ENCODE measurements at regions of chr6 and their contacts with region 1.

Region 1: DNA sequence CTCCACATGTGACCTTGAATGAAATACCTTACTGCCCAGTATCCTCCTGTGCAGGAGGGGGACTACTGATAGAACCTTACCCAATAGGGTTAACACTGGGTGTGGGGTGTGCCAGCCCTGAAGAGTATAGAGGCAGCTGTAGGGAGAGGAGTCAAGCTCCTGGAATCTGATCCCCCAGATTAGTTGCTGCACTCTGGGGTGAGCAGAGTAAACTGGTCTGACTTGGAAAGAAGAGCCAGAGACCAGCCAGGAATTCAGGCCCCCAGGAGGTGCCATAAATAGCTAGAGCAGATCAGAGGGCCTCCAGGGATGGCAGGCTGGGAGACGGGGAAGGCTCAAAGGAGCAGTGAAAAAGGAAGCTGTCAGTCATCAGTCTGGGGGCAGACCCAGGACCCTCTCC is 3.5 kb upstream of the APOBEC2 start:
- DNase-seq: peak; percentile 69 to 85
- H3K4me3 ChIP-seq: no peak overlapping the region
- H3K4me3 Mint-ChIP-seq: peak overlapping the region; percentile 48
- H3K27ac Mint-ChIP-seq: peak overlapping the region; percentile 64
- H3K4me1 ChIP-seq: peaks cover 96% of the 10 kb centered on the region
- H3K4me1 Mint-ChIP-seq: peaks cover 80% of the 10 kb centered on the region
- H3K27me3 ChIP-seq: no peaks in the 10 kb centered on the region
- H3K27me3 Mint-ChIP-seq: no peaks in the 10 kb centered on the region
- CTCF ChIP-seq: no peak

Region 2: GRCh38 chr6:41039060-41039998 is 10.2 kb before region 1 on chr6 and contains the start of gene UNC5CL:
- CTCF ChIA-PET with region 1: interaction called, 5 read pairs
- POLR2A ChIA-PET with region 1: interaction called, 3 read pairs
- intact Hi-C with region 1: loop called (anchors 1 kb)
- DNase-seq: peak; percentile 83 to 84
- H3K4me3 ChIP-seq: no peak within 1 kb of the TSS
- H3K4me3 Mint-ChIP-seq: peak within 1 kb of the TSS; percentile 63
- H3K27ac Mint-ChIP-seq: peak within 1 kb of the TSS; percentile 96
- H3K4me1 ChIP-seq: peaks cover 59% of the 10 kb centered on the region
- H3K4me1 Mint-ChIP-seq: peaks cover 41% of the 10 kb centered on the region
- H3K27me3 ChIP-seq: no peaks in the 10 kb centered on the region
- H3K27me3 Mint-ChIP-seq: no peaks in the 10 kb centered on the region
- CTCF ChIP-seq: peak; percentile 57 to 65
- total RNA-seq, gene UNC5CL: 4.5 and 5.5 TPM in 2 replicates

Measured in Caco-2 (cell line).